Breast epithelium (tissue), 4 donors: ENCODE measurements at regions of chr6 and their contacts with region 1.

Region 1: GRCh38 chr6:73145690-73146089 is 79.6 kb downstream of the KHDC1L start:
- DNase-seq: no peak
- H3K4me3 ChIP-seq: no peak overlapping the region
- H3K27ac ChIP-seq: no peak overlapping the region
- H3K4me1 ChIP-seq: no peaks in the 10 kb centered on the region
- H3K27me3 ChIP-seq: no peaks in the 10 kb centered on the region
- CTCF ChIP-seq: no peak
- POLR2A ChIP-seq: no peak

Region 2: GRCh38 chr6:73129653-73130443 is 15.8 kb before region 1 on chr6:
- intact Hi-C with region 1: loop called (anchors 2 kb)
- DNase-seq: peak; percentile 65 to 78
- H3K4me3 ChIP-seq: peak overlapping the region in 1 of 3 donors; percentile 12
- H3K27ac ChIP-seq: no peak overlapping the region
- H3K4me1 ChIP-seq: no peaks in the 10 kb centered on the region
- H3K27me3 ChIP-seq: no peaks in the 10 kb centered on the region
- CTCF ChIP-seq: peak; percentile 67 to 93 (median 90)
- POLR2A ChIP-seq: no peak